Activated naive CD8-positive, alpha-beta T cell treated with anti-CD3 and anti-CD28 coated beads, Interleukin-2, amount 10 ng/mL, durations not matched to agents 7 days and 5 days (primary cell): ENCODE measurements at regions of chr5 and their contacts with region 1.

Region 1: DNA sequence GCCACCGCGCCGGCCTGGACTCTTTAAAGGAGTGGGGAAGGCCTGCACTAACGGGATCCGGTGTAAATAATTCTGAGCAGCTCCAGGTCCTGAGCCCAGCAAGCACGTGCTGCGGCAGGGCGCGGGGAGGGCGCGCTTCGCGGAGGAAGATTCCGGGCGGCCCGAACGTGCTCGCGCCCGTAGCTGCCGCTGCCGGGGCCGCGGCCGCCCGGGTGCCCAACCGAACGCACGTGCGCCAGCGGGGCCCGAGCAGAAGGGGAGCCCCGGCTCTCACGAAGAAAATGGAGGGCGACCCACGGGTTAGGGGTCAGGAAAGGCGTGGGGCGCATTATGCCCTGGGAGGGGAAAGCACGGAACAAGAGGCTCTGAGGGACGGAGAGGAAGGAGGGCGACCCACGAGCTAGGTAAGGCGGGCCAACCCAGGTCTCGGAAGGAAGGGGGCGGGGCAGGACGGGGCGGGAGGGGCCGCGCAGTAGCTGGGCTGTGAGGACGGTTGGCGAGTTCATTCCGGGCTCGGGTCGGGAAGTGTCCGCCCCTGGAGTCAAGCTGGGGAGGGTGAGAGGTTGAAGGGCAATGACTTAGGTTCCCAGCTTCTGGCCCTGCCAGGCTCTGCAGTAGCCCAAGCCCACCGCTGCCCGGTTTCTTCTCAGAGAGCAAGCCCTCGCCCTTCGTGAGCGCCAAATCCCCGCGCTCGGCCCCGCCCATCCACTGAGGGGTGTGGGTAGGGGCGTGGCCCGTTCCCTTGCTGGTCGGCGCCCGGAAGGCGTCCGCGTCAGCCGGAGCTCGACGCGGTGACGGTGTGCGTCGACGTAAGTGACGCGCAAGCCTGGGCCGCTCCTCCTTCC is at the start of gene ZNF131:
- DNase-seq: peak; percentile 99
- ATAC-seq: peak; percentile 88
- H3K4me3 Mint-ChIP-seq: peak within 1 kb of the TSS; percentile 93
- H3K27ac Mint-ChIP-seq: peak within 1 kb of the TSS; percentile 98
- H3K4me1 Mint-ChIP-seq: peaks cover 29% of the 10 kb centered on the region
- H3K27me3 Mint-ChIP-seq: no peaks in the 10 kb centered on the region
- total RNA-seq, gene ZNF131: 55.6 to 58.0 TPM

Region 2: GRCh38 chr5:42994246-42995151 is 126.4 kb before region 1 on chr5:
- POLR2A ChIA-PET with region 1: interaction called, 16 read pairs
- DNase-seq: peak; percentile 84
- ATAC-seq: peak; percentile 59
- H3K4me3 Mint-ChIP-seq: peak overlapping the region; percentile 98
- H3K27ac Mint-ChIP-seq: peak overlapping the region; percentile 98
- H3K4me1 Mint-ChIP-seq: peaks cover 23% of the 10 kb centered on the region
- H3K27me3 Mint-ChIP-seq: no peaks in the 10 kb centered on the region

Region 3: GRCh38 chr5:43019614-43020293 is 101.2 kb before region 1 on chr5:
- POLR2A ChIA-PET with region 1: interaction called, 27 read pairs
- DNase-seq: peak; percentile 75
- ATAC-seq: peak; percentile 72
- H3K4me3 Mint-ChIP-seq: peak overlapping the region; percentile 97
- H3K27ac Mint-ChIP-seq: peak overlapping the region; percentile 100
- H3K4me1 Mint-ChIP-seq: peaks cover 27% of the 10 kb centered on the region
- H3K27me3 Mint-ChIP-seq: no peaks in the 10 kb centered on the region

Region 4: GRCh38 chr5:43066799-43067741 is 53.9 kb before region 1 on chr5:
- POLR2A ChIA-PET with region 1: interaction called, 56 read pairs
- DNase-seq: peak; percentile 85
- ATAC-seq: peak; percentile 39
- H3K4me3 Mint-ChIP-seq: peak overlapping the region; percentile 99
- H3K27ac Mint-ChIP-seq: peak overlapping the region; percentile 100
- H3K4me1 Mint-ChIP-seq: peaks cover 30% of the 10 kb centered on the region
- H3K27me3 Mint-ChIP-seq: no peaks in the 10 kb centered on the region

Region 5: GRCh38 chr5:43140286-43140685 is 19.3 kb after region 1 on chr5:
- POLR2A ChIA-PET with region 1: interaction called, 15 read pairs
- DNase-seq: no peak
- ATAC-seq: peak; percentile 26
- H3K4me3 Mint-ChIP-seq: no peak overlapping the region
- H3K27ac Mint-ChIP-seq: no peak overlapping the region
- H3K4me1 Mint-ChIP-seq: peaks cover 31% of the 10 kb centered on the region
- H3K27me3 Mint-ChIP-seq: no peaks in the 10 kb centered on the region

Region 6: DNA sequence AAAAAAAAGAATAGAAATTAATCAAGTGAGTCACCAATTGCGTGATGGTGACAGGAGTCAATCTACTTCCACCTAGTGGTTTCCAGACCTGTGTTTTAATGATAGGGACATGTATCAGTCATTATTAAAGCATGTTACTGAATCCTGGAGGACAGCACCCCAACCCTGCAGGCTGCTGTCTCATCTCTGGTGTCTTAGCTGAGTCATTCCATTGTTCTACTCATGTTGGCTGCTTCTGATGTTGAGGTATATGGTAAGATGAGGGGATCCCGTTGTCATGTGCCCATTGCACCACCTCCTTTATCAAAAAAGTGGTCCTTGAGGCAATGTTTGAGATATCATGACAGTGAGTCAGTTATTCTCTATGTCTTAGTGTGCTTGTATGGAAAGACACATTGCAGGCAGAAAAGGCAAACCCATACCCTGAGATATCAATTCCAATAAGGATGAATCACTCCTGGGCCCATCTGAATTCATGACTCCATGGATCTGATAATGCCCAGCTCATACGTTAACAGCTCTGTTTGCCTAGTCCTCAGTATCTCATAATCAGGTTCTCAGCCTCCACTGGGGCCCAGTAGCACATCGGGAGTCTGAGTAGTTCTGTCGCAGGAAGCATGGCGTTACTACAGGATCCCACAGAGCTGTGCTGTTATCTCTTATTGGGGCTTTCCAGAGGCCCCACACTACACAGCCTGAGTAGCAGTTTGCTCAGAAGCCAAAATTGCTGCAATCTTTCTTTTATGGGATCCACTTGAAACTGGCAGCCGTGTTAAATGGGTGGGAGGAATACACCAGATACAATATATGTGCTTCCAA is 161.1 kb after region 1 on chr5:
- POLR2A ChIA-PET with region 1: no interaction called
- DNase-seq: no peak
- ATAC-seq: no peak
- H3K4me3 Mint-ChIP-seq: no peak overlapping the region
- H3K27ac Mint-ChIP-seq: no peak overlapping the region
- H3K4me1 Mint-ChIP-seq: no peaks in the 10 kb centered on the region
- H3K27me3 Mint-ChIP-seq: no peaks in the 10 kb centered on the region

Region 7: GRCh38 chr5:43313035-43313853 is 192.3 kb after region 1 on chr5 and contains the start of gene HMGCS1:
- POLR2A ChIA-PET with region 1: interaction called, 30 read pairs
- DNase-seq: peak; percentile 96
- ATAC-seq: peak; percentile 96
- H3K4me3 Mint-ChIP-seq: peak within 1 kb of the TSS; percentile 100
- H3K27ac Mint-ChIP-seq: peak within 1 kb of the TSS; percentile 93
- H3K4me1 Mint-ChIP-seq: peaks cover 31% of the 10 kb centered on the region
- H3K27me3 Mint-ChIP-seq: no peaks in the 10 kb centered on the region
- total RNA-seq, gene HMGCS1: 46.9 to 51.8 TPM